WTC11 (cell line): ENCODE measurements at regions of chr16 and their contacts with region 1.

Region 1: GRCh38 chr16:3003582-3004302 is 9.0 kb upstream of the CLDN9 start:
- DNase-seq: peak; percentile 99
- ATAC-seq: peak; percentile 85
- H3K4me3 Mint-ChIP-seq: peak overlapping the region; percentile 42
- H3K27ac Mint-ChIP-seq: no peak overlapping the region
- H3K4me1 Mint-ChIP-seq: peaks cover 37% of the 10 kb centered on the region
- H3K27me3 Mint-ChIP-seq: no peaks in the 10 kb centered on the region
- CTCF ChIP-seq: no peak

Region 2: GRCh38 chr16:2968738-2969544 is 34.8 kb before region 1 on chr16 and contains the start of gene PAQR4:
- CTCF ChIA-PET with region 1: interaction called, 16 read pairs
- POLR2A ChIA-PET with region 1: interaction called, 6 read pairs
- DNase-seq: peak; percentile 89
- ATAC-seq: peak; percentile 62
- H3K4me3 Mint-ChIP-seq: peak within 1 kb of the TSS; percentile 66
- H3K27ac Mint-ChIP-seq: no peak within 1 kb of the TSS
- H3K4me1 Mint-ChIP-seq: peaks cover 27% of the 10 kb centered on the region
- H3K27me3 Mint-ChIP-seq: peaks cover 33% of the 10 kb centered on the region
- CTCF ChIP-seq: no peak
- total RNA-seq, gene PAQR4: 21.1 to 32.4 TPM (median 21.5 TPM) in 3 replicates

Region 3: DNA sequence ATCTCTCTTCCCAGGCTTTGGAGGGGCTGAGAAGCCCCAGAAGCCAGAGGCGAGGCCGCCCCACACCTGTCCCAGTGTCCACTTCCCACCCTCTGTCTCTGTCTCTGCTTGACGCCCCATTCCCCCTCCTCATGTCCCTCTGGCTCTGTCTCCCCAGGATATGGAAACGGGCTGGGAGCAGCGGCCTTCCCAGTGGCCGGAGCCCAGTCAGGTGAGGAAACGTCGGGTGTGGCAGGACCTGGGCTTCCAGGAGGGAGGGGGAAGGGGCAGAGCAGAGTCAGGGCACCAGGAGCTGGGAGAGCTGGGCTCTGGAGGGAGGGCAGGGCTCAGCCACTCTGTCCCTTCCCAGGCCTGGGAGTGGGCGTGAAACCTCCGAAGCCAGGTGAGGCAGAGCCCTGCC is 12.9 kb before region 1 on chr16:
- CTCF ChIA-PET with region 1: interaction called, 13 read pairs
- POLR2A ChIA-PET with region 1: interaction called, 4 read pairs
- DNase-seq: no peak
- ATAC-seq: peak; percentile 32
- H3K4me3 Mint-ChIP-seq: no peak overlapping the region
- H3K27ac Mint-ChIP-seq: no peak overlapping the region
- H3K4me1 Mint-ChIP-seq: peaks cover 21% of the 10 kb centered on the region
- H3K27me3 Mint-ChIP-seq: no peaks in the 10 kb centered on the region
- CTCF ChIP-seq: no peak

Region 4: DNA sequence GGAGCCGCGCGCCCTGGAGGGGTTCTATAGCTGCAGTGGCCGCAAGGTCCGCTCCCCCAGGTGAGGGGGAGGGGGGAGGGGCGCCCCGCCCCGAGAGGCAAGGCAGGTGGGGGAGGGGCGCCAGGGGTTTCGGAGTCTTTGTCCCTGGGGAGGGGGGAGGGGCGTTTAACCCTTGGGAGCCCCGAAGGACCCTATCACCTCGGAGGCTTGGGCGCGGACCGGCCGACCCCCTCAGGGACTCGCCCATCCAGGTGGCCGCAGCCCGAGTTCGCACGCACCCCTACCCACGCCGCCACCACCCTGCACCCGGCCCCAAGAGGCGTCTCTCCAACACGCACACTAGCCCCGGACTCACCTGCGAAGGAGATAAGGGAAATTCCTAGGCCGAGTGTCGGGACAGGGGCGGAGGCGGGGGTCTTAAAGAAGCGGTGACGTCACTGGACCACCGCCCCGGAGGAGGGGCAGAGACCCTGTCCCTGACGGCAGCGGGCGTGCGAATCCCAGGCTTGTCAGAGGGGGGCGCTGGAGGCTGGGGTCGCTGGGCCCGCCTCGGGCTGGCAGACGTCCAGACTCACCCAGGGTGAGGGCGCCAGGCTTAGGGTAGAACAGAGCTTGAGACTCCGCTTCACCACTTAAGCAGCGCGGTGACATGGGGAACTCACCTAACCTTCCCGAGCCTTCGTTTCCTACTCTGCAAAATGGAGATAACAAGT is 14.2 kb after region 1 on chr16 and contains the start of gene CLDN6:
- CTCF ChIA-PET with region 1: interaction called, 360 read pairs
- POLR2A ChIA-PET with region 1: interaction called, 502 read pairs
- DNase-seq: peak; percentile 99
- ATAC-seq: peak; percentile 49
- H3K4me3 Mint-ChIP-seq: peak within 1 kb of the TSS; percentile 93
- H3K27ac Mint-ChIP-seq: peak within 1 kb of the TSS; percentile 96
- H3K4me1 Mint-ChIP-seq: peaks cover 69% of the 10 kb centered on the region
- H3K27me3 Mint-ChIP-seq: peaks cover 5% of the 10 kb centered on the region; the same call in 1 of the 2 replicates
- CTCF ChIP-seq: peak; percentile 81
- total RNA-seq, gene CLDN6: 746 to 778 TPM (median 775 TPM) in 3 replicates

Region 5: DNA sequence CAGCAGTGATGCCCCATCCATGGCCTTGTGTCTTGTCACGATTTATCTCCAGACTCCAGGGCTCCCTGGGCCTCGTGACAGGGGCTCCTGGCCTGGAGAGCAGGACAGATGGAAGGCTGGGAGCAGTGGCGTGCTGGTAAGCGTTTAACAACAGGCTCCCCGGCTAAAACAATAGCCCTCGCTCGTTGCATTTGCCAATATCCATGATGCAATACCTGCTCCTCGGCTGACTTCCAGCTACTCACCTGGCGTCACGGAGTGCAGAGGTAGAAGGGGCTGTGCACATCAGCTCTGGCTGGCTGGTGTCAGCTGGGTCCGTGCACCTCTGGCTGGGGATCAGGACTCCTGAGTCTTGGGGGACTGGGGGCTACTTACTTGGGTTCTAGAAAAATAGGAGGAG is 34.5 kb after region 1 on chr16:
- CTCF ChIA-PET with region 1: interaction called, 10 read pairs
- POLR2A ChIA-PET with region 1: interaction called, 10 read pairs
- DNase-seq: peak; percentile 71
- ATAC-seq: peak; percentile 31
- H3K4me3 Mint-ChIP-seq: no peak overlapping the region
- H3K27ac Mint-ChIP-seq: 0 out of 2 replicates have a peak overlapping the region, but pooled peaks have one; percentile 53
- H3K4me1 Mint-ChIP-seq: peaks cover 23% of the 10 kb centered on the region
- H3K27me3 Mint-ChIP-seq: peaks cover 3% of the 10 kb centered on the region; the same call in 1 of the 2 replicates
- CTCF ChIP-seq: no peak

Region 6: DNA sequence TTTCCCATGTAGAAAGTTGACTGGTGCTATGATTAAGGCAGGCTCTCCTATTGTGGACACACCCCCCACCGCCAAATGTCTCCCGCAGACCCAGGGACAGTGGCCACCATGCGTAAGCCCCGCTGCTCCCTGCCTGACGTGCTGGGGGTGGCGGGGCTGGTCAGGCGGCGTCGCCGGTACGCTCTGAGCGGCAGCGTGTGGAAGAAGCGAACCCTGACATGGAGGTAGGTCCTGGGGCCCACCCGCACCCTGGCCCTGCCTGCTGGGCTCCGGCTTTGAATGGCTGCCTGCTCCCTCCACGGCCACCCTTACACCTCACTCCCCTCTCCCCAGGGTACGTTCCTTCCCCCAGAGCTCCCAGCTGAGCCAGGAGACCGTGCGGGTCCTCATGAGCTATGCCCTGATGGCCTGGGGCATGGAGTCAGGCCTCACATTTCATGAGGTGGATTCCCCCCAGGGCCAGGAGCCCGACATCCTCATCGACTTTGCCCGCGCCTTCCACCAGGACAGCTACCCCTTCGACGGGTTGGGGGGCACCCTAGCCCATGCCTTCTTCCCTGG is 46.3 kb after region 1 on chr16:
- CTCF ChIA-PET with region 1: no interaction called
- POLR2A ChIA-PET with region 1: no interaction called
- DNase-seq: no peak
- ATAC-seq: no peak
- H3K4me3 Mint-ChIP-seq: no peak overlapping the region
- H3K27ac Mint-ChIP-seq: no peak overlapping the region
- H3K4me1 Mint-ChIP-seq: peaks cover 14% of the 10 kb centered on the region; the same call in 1 of the 2 replicates
- H3K27me3 Mint-ChIP-seq: peaks cover 28% of the 10 kb centered on the region
- CTCF ChIP-seq: no peak